ENCODE measurements at regions of chr1 and their contacts with region 1.

Region 1: GRCh38 chr1:19101244-19101643 is 108.8 kb downstream of the UBR4 start:
- DNase-seq: peak; percentile 60
- ATAC-seq: no peak
- H3K4me3 ChIP-seq: no peak overlapping the region
- H3K27ac ChIP-seq: no peak overlapping the region
- H3K4me1 ChIP-seq: 0 out of 2 replicates have a peak, but pooled peaks cover 2% of the 10 kb centered on the region
- H3K27me3 ChIP-seq: no peaks in the 10 kb centered on the region
- CTCF ChIP-seq: no peak
- POLR2A ChIP-seq: no peak
- RAD21 ChIP-seq: no peak

Region 2: GRCh38 chr1:19156676-19157075 is 55.4 kb after region 1 on chr1:
- CTCF ChIA-PET with region 1: no interaction called
- POLR2A ChIA-PET with region 1: no interaction called
- dilution Hi-C with region 1: no loop called
- in situ Hi-C with region 1: loop called (anchors 10 kb)
- intact Hi-C with region 1: no loop called
- DNase-seq: peak; percentile 44
- ATAC-seq: no peak
- H3K4me3 ChIP-seq: no peak overlapping the region
- H3K27ac ChIP-seq: no peak overlapping the region
- H3K4me1 ChIP-seq: no peaks in the 10 kb centered on the region
- H3K27me3 ChIP-seq: no peaks in the 10 kb centered on the region
- CTCF ChIP-seq: no peak
- POLR2A ChIP-seq: no peak
- RAD21 ChIP-seq: no peak

Measured in IMR-90 (cell line).